Cardiac septum (tissue), 1 donor: ENCODE measurements at regions of chr1 and their contacts with region 1.

Region 1: DNA sequence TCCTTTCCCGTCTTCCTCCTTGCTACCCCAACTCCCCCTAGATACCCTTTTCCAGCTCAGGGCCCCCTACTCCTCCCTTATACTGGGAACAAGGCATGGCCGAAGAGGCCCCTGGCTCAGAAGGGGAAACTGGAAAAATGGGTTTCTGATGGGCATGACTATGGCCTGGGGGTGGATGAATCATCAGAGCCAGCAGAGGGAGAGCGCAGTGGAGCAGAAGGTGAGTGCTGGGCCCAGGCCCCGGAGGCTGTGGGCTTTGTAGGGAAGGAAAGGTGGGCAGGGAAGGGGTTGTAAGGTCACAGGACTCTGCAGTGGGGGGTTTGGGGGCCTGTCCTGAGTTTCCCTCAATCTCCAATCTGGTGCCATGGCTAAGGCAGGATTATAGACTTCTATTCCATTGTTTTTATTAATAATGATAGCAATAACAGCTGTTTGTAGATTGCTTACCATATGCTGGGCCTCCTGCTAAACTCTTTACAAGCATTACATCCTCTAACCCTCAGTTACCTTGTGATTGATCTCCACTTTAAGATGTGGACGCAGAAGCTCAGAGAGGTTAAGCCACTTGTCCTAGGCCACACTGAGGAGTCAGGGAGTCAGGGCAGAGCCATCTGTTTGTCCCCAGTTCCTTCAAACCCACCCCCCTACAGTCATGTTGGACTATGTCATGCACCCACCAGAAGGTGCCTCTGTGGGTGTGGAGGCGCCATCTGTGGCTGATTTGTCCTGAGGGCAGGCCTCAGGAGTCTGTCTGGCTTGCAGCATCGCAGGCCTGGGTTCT is 36.2 kb upstream of the ZNF362 start:
- DNase-seq: no peak

Region 2: DNA sequence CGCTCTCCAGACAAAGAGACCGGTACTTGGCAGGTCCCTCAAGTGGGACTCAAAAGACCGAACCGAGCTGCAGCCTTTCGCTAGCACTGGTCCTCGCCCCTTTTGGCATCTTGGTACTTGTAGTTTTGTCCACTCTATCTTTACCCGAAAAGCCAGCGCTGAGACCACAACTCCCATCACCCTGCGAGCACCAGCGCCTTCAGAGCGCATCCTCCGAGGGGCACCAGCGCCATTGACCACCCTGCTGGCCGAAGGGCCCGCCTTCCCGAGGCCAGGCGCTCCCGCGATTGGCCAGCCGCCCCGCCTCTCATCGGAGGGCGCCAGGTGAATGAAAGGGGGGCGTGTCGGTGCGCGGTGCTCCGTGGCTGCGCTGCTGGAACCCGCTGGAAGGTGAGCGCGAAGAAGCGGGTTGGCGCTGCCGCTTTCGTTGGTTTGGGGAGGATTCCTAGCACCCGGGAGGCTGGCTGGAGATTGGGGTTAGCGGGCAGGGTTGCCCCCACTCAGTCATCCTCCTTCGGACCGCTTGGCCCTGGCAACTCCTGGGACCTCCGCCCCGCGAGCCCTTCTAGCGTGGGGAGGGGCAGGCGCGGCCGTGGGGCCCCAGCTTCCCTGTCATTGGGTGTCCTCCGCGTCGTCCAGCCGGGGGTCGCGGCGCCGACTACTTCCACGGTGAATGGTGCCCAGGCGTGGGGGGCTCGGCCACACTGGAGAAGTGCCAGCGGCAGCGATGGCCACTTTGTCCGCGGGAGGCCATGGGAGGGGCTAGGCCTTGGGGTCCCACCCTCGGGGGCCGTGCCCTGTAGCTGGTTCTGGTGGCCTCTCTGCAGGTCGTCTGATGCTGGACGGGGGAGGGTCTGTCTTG is 755.1 kb before region 1 on chr1 and contains the start of gene ZBTB8B:
- intact Hi-C with region 1: no loop called
- DNase-seq: peak; percentile 76
- total RNA-seq, gene ZBTB8B: not detected

Region 3: GRCh38 chr1:33455539-33456501 is 235.7 kb after region 1 on chr1:
- intact Hi-C with region 1: loop called (anchors 5 kb)
- DNase-seq: no peak